MCF 10A (cell line): ENCODE measurements at regions of chr19 and their contacts with region 1.

Region 1: DNA sequence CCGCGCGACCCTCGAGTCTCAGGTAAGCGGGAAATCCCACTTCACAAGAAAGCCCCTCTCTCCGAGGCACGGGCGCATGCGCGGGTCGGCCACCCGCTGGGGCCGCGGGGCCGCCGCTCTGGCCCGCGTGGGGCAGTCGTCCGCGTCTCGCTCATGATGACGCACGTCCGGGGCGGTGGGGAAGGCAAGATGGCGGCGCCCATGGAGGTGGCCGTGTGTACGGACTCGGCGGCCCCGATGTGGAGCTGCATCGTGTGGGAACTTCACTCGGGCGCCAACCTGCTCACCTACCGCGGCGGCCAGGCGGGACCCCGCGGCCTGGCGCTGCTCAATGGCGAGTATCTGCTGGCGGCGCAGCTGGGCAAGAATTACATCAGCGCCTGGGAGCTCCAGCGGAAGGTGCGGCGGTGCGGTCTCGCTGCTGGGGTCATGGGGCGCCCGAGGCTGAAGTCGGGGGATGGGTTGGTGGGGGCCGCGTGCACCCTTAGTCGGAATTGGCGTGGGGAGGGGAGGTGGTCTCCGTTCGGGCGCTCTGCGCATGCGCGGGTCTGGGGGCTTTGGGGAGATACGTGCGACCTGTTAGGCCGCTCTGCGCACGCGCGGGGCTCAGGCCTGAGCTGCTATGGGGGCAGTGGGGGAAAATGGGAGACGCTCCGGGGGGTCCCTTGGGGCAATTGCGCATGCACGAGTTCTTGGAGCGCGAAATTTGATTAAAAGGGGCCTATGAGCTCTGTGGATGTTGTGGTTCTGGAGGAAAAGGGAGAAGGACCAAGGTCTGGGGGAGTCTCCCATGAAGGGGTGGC is at the start of gene WDR18:
- DNase-seq: peak; percentile 89
- H3K4me3 Mint-ChIP-seq: peak within 1 kb of the TSS; percentile 97
- H3K27ac Mint-ChIP-seq: peak within 1 kb of the TSS; percentile 94
- H3K4me1 Mint-ChIP-seq: peaks cover 11% of the 10 kb centered on the region
- H3K27me3 Mint-ChIP-seq: no peaks in the 10 kb centered on the region
- CTCF ChIP-seq: no peak
- total RNA-seq, gene WDR18: 81.9 and 96.7 TPM in 2 replicates

Region 2: DNA sequence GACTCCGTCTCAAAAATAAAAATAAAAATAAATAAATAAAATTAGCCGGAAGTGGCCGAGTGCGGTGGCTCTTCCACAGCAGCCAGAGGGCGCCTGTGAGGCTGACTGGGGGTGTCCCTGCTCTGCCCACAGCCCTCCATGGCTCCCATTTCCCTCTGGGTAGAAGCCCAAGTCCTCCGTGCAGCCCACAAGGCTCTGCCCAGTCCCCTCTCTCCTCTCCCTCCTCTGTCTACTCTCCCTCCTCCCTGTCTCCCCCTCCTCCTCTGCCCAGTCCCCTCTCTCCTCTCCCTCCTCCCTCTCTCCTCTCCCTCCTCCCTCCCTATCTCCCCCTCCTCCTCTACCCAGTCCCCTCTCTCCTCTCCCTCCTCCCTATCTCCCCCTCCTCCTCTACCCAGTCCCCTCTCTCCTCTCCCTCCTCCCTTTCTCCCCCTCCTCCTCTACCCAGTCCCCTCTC is 213.0 kb before region 1 on chr19:
- CTCF ChIA-PET with region 1: interaction called, 8 read pairs
- POLR2A ChIA-PET with region 1: no interaction called
- intact Hi-C with region 1: loop called (anchors 5 kb)
- DNase-seq: peak; percentile 71
- H3K4me3 Mint-ChIP-seq: no peak overlapping the region
- H3K27ac Mint-ChIP-seq: no peak overlapping the region
- H3K4me1 Mint-ChIP-seq: no peaks in the 10 kb centered on the region
- H3K27me3 Mint-ChIP-seq: no peaks in the 10 kb centered on the region
- CTCF ChIP-seq: peak; percentile 71

Region 3: GRCh38 chr19:850221-850978 is 134.0 kb before region 1 on chr19:
- CTCF ChIA-PET with region 1: no interaction called
- POLR2A ChIA-PET with region 1: interaction called, 4 read pairs
- intact Hi-C with region 1: loop called (anchors 10 kb)
- DNase-seq: peak; percentile 94
- H3K4me3 Mint-ChIP-seq: peak overlapping the region; percentile 46
- H3K27ac Mint-ChIP-seq: no peak overlapping the region
- H3K4me1 Mint-ChIP-seq: peaks cover 14% of the 10 kb centered on the region
- H3K27me3 Mint-ChIP-seq: peaks cover 12% of the 10 kb centered on the region
- CTCF ChIP-seq: no peak

Region 4: GRCh38 chr19:872266-872951 is 112.0 kb before region 1 on chr19:
- CTCF ChIA-PET with region 1: no interaction called
- POLR2A ChIA-PET with region 1: no interaction called
- intact Hi-C with region 1: no loop called
- DNase-seq: peak; percentile 95
- H3K4me3 Mint-ChIP-seq: peak overlapping the region; percentile 75
- H3K27ac Mint-ChIP-seq: peak overlapping the region; percentile 64
- H3K4me1 Mint-ChIP-seq: peaks cover 24% of the 10 kb centered on the region
- H3K27me3 Mint-ChIP-seq: no peaks in the 10 kb centered on the region
- CTCF ChIP-seq: no peak

Region 5: DNA sequence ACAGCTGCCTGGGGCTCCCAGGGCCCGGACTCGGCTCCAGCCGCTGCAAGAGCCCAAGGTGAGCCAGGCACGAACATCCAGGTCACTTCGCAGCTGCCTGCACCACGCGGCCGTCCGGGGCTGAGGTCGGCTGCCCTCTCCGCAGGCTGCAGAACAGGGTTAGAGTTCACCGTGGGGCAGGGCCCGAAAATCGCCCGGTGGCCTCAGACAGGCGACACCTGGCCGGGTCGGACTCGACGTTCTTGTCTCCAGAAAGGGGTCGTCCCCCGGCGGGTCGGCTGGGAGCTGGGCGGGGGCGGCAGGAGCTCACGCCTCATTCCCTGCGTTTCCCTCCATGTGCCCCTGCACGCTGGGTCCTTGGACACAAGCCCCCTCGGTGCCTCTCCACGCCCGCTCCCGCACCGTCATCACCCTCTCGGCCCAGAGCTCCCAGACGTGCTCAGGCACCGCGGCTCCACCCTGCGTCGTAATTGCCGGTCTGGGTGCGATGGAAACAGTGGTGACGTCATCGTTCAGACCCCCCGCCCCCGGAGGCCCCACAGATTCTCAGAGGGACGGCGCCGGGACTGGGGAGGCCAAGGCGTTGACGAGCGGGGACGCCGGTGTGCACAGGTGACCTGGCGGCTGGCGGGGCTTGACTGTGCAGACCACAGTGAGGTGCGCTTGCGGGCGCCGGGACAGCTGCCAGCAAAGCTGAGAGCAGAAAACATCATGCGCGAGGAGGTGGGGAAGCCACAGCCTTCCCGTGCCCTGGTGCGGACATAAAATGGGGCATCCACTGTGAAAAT is 11.9 kb after region 1 on chr19:
- CTCF ChIA-PET with region 1: interaction called, 4 read pairs
- POLR2A ChIA-PET with region 1: interaction called, 32 read pairs
- intact Hi-C with region 1: no loop called
- DNase-seq: peak; percentile 52
- H3K4me3 Mint-ChIP-seq: peak overlapping the region; percentile 54
- H3K27ac Mint-ChIP-seq: no peak overlapping the region
- H3K4me1 Mint-ChIP-seq: peaks cover 6% of the 10 kb centered on the region
- H3K27me3 Mint-ChIP-seq: peaks cover 17% of the 10 kb centered on the region
- CTCF ChIP-seq: no peak

Region 6: DNA sequence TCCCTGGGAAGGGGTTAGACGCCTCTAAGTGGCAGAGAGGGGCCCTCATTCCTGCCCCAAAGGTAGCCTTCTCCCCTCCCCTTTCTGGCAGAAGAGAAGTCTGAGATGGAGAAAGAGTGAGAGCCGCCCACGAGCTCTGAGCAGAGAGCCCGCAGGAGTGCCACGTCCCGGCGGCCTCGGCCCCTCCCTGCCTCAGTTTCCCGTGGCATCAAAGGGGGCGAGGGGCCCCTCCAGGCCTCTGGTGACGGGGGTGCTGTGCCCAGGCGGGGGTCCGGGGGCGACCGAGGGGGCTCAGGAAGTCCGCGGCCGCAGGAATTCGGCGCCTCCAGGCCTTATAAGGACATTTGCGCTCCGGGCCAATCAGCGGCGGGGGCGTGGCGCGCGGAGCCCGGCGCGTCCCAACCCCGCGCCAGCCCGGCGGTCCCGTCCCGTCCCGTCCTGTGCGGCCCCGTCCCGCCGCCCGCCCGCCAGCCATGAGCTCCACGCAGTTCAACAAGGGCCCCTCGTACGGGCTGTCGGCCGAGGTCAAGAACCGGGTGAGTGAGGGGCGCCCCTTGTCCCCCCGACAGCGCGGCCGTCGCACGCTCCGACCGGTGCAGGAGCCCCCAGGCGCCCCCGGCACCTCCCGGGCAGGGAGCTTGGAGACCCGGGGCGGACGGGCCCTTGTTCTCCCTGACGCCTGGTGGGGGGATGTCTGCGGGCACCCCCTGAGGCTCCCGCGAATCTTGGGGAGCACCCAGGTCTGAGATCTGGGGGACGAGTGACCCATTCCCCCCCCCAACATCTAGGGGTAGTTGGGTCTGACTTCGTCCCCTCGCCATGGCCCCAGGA is 42.0 kb after region 1 on chr19 and contains the start of gene CNN2:
- CTCF ChIA-PET with region 1: no interaction called
- POLR2A ChIA-PET with region 1: interaction called, 13 read pairs
- intact Hi-C with region 1: no loop called
- DNase-seq: peak; percentile 80
- H3K4me3 Mint-ChIP-seq: peak within 1 kb of the TSS; percentile 86
- H3K27ac Mint-ChIP-seq: peak within 1 kb of the TSS; percentile 96
- H3K4me1 Mint-ChIP-seq: peaks cover 12% of the 10 kb centered on the region
- H3K27me3 Mint-ChIP-seq: no peaks in the 10 kb centered on the region
- CTCF ChIP-seq: no peak
- total RNA-seq, gene CNN2: 112 and 166 TPM in 2 replicates

Region 7: GRCh38 chr19:1046836-1047695 is 62.7 kb after region 1 on chr19:
- CTCF ChIA-PET with region 1: no interaction called
- POLR2A ChIA-PET with region 1: no interaction called
- intact Hi-C with region 1: no loop called
- DNase-seq: no peak
- H3K4me3 Mint-ChIP-seq: no peak overlapping the region
- H3K27ac Mint-ChIP-seq: no peak overlapping the region
- H3K4me1 Mint-ChIP-seq: no peaks in the 10 kb centered on the region
- H3K27me3 Mint-ChIP-seq: no peaks in the 10 kb centered on the region
- CTCF ChIP-seq: no peak

Region 8: GRCh38 chr19:1343041-1343440 is 358.7 kb after region 1 on chr19:
- CTCF ChIA-PET with region 1: no interaction called
- POLR2A ChIA-PET with region 1: no interaction called
- intact Hi-C with region 1: no loop called
- DNase-seq: no peak
- H3K4me3 Mint-ChIP-seq: no peak overlapping the region
- H3K27ac Mint-ChIP-seq: no peak overlapping the region
- H3K4me1 Mint-ChIP-seq: no peaks in the 10 kb centered on the region
- H3K27me3 Mint-ChIP-seq: peaks cover 9% of the 10 kb centered on the region
- CTCF ChIP-seq: no peak